Ascending aorta (tissue), 2 donors: ENCODE measurements at regions of chr1 and their contacts with region 1.

Region 1: DNA sequence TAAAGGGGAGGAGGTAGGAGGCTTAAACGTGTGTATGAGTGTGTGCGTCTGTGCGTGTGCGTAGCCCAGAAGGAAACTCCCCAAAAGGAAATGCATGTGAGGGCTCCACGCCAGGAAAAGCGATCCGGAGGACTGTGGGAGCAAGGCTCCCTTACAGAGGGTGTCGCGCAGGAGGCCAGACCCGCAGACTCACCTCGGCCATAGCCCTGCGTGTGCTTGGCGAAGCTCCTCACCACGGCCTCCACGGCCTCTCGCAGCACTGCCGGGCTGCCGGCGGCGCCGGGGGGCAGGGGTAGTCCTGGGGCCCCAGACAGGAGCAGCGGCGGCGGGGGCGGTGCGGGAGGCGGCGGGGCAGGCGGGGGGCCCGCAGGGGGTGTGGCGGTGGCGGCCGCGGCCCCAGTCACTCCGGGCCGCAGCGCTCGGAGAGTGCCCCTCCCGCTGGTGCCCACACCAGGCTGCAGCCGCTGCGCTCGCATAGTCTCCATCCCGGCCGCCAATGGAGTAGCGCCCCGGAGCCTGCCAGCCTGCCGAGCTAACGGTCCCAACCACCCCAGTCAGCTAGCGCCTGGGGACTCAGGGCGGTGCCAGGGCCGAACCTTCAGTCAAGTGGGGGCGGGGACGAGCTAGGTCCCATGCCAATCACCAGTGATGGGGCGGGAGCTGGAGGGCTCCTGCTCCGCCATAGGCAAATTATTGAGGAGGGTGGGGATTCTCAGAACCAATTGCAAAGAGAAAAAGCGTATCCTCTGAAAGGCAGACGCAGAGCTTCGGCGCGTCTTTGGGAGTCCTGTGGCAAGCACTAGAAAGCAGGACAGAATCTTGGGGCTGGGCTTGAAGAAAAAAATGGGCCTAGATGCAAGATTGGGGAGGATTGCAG is at the start of gene LIX1L:
- DNase-seq: peak; percentile 91 to 98
- H3K4me3 ChIP-seq: peak within 1 kb of the TSS; percentile 87 to 99
- H3K27ac ChIP-seq: peak within 1 kb of the TSS; percentile 96 to 97
- H3K4me1 ChIP-seq: peaks cover 15 to 56% of the 10 kb centered on the region in 2 donors
- H3K27me3 ChIP-seq: no peaks in the 10 kb centered on the region
- CTCF ChIP-seq: no peak
- total RNA-seq, gene LIX1L: 44.0 TPM

Region 2: DNA sequence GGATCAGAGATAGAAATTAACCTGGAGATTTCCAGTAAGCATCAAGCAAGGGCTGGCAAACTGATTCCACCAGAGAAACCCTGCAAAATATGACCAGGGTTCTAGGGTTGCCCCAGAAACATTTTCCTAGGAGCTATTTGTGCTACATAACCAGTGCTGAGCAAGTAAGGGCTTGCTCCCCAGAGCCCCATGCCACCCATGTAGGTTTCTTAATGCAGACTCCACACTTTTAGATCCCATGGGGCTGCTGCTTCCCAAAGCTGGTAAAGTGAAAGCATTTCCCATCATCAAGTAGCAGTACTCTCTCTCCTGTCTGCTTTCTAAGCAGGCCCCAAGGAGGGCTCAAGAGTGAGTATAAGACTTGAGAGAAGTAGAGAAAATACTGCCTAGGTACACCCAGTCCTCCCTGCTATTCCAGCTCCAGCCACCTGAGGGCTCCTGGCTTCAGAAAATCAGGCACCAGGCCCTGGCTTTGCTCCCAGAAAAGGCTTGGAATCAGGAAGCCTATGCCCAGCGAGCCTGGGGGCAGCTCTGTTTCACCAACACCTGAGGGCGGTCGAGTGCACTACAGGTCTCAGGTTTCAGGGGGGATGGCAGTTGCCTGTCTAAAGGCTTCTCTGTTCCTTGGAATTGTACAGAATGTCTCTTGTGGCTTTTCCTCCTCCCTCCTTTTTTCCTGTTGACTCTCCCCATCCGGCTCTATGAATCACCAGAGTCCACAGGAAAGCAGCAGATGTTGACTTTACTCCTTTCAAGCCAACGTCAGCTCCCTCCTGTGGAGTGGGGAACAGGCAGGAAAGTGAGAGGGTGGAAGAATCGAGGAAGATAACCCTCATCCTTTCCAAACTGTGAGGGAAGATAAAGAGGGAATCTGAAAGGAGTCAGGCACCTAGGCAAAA is 65.8 kb before region 1 on chr1:
- intact Hi-C with region 1: loop called (anchors 2 kb)
- DNase-seq: peak; percentile 89 to 99
- H3K4me3 ChIP-seq: peak overlapping the region; percentile 10 to 23
- H3K27ac ChIP-seq: peak overlapping the region; percentile 92 to 98
- H3K4me1 ChIP-seq: peaks cover 14 to 36% of the 10 kb centered on the region in 2 donors
- H3K27me3 ChIP-seq: no peaks in the 10 kb centered on the region
- CTCF ChIP-seq: peak; percentile 93 to 97 (median 95)

Region 3: DNA sequence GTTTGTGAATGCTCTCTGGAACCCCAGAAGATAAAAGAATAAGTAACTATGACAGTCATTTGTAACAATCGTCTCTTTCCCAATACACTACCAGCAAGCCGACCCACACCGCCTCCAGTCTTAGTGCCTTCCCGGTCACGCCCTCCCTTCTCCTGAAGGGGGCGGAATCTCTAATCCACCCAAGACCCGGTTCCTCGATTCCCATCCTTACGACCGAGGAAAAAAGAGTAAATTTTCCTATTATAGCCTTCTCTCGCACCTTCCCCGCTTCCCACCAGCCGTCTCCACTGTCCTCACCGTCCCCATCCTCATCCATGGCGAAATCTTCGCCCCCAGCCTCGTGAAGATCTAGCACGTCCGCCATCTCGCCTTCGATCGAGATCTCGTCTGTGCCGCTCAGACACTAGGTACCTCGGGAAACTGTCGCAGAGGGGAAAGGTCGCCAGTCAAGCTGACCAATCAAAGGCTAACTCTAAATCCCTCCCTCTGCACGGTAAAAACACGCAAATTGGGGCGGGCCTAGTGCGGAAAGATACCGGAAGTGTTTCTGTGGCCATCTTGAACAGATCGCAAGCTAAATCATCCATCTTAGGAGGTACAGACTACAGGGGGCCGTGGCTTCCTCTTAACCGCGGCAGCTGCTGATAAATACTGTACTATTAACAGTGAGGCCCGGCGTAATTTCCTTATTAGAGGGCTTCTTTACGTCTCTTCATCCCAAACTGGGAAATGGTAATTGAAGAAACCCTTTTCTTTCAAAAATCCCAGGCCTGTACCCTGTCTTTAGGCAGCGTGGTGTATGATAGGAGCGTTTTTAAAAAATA is 30.4 kb before region 1 on chr1 and contains the start of gene RBM8A:
- intact Hi-C with region 1: loop called (anchors 1 kb)
- DNase-seq: peak; percentile 88 to 98
- H3K4me3 ChIP-seq: peak within 1 kb of the TSS; percentile 70 to 73
- H3K27ac ChIP-seq: peak within 1 kb of the TSS; percentile 97 to 98
- H3K4me1 ChIP-seq: peaks cover 6 to 12% of the 10 kb centered on the region in 2 donors
- H3K27me3 ChIP-seq: no peaks in the 10 kb centered on the region
- CTCF ChIP-seq: peak; percentile 63 to 76 (median 68)
- total RNA-seq, gene RBM8A: 48.9 TPM

Region 4: GRCh38 chr1:145972580-145972979 is 14.9 kb after region 1 on chr1:
- intact Hi-C with region 1: no loop called
- DNase-seq: no peak
- H3K4me3 ChIP-seq: no peak overlapping the region
- H3K27ac ChIP-seq: no peak overlapping the region
- H3K4me1 ChIP-seq: peaks cover 0 to 4% of the 10 kb centered on the region in 2 donors
- H3K27me3 ChIP-seq: no peaks in the 10 kb centered on the region
- CTCF ChIP-seq: no peak

Region 5: DNA sequence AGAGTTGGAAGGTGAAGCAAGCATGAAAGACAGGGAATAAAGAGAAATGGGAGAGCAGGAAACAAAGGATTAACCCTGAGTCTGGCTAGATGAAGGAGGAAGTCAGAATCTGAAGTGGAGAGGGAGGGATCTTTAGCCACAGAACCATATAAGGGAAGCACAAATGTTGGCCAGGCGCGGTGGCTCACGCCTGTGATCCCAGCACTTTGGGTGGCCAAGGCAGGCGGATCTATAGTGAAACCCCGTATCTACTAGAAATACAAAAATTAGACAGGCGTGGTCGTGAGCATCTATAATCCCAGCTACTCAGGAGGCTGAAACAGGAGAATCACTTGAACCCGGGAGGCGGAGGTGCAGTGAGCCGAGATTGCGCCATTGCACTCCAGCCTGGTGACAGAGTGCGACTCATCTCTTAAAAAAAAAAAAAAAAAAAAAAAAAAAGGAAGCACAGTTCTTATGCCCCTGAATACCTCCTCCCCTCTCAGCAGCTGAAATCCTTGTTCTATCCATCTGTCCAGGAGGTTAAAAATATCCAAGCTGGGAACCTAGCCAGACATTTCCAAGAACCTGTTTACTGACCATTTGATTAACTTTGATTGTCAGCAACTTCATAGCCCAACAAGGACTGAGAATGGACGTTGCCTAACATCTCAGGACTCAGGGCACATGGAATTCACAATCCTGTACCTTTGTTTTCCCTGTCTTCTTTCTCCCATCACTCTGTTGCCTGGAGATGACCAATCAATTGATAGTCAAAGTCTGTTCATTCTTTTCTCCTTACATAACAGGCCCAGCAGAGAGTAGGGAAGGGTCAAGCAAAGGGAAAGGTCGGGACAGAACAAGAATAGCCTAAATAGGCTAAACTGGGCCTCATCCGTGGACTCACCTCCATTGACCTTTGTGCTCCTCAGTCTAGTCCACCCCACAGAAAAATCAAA is 28.1 kb after region 1 on chr1:
- intact Hi-C with region 1: no loop called
- DNase-seq: peak in 1 of 2 donors; percentile 70
- H3K4me3 ChIP-seq: peak overlapping the region; percentile 12 to 19
- H3K27ac ChIP-seq: peak overlapping the region; percentile 90 to 98
- H3K4me1 ChIP-seq: peaks cover 21 to 49% of the 10 kb centered on the region in 2 donors
- H3K27me3 ChIP-seq: no peaks in the 10 kb centered on the region
- CTCF ChIP-seq: no peak